GM12878 (cell line): ENCODE measurements at regions of chr12 and their contacts with region 1.

Region 1: DNA sequence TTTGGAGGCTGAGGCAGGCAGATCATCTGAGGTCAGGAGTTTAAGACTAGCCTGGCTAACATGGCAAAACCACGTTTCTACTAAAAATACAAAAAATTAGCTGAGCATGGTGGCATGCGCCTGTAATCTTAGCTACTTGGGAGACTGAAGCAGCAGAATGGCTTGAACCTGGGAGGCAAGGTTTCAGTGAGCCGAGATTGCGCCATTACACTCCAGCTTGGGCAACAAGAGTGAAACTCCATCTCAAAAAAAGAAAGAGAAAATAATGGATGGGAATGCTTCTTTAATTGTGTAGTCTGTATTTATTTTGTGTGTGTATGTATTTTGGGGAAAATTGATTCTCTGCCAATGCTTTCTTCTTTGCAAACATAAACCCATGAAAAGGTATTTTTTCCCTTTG is 32.5 kb downstream of the SRGAP1 start:
- DNase-seq: no peak
- ATAC-seq: no peak
- H3K4me3 ChIP-seq: no peak overlapping the region
- H3K27ac ChIP-seq: no peak overlapping the region
- H3K4me1 ChIP-seq: no peaks in the 10 kb centered on the region
- H3K27me3 ChIP-seq: no peaks in the 10 kb centered on the region
- CTCF ChIP-seq: no peak
- EP300 ChIP-seq: no peak
- POLR2A ChIP-seq: no peak
- RAD21 ChIP-seq: no peak

Region 2: DNA sequence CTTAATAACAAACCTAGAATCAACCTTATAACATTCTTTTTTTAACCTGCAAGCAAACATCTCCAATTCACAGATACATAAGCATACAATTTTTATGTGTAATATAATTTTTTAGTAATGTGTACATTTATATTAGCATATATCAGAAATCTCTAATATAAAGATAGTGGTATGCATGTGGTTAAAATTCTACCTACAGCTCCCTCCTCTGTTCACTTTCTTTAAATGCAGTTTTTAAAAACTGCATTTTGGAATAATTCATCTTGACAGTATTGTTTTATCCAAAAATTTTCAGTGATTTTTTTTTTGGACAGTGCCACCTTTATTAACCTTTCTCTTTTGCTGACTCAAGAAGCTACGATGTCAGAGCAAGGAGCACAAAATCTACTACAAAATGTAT is 110.5 kb before region 1 on chr12:
- CTCF ChIA-PET with region 1: no interaction called
- POLR2A ChIA-PET with region 1: no interaction called
- RAD21 ChIA-PET with region 1: no interaction called
- SMC1A ChIA-PET with region 1: no interaction called
- in situ Hi-C with region 1: no loop called
- intact Hi-C with region 1: no loop called
- DNase-seq: no peak
- ATAC-seq: no peak
- H3K4me3 ChIP-seq: no peak overlapping the region
- H3K27ac ChIP-seq: no peak overlapping the region
- H3K4me1 ChIP-seq: no peaks in the 10 kb centered on the region
- H3K27me3 ChIP-seq: no peaks in the 10 kb centered on the region
- CTCF ChIP-seq: no peak; a peak in 1 of 6 replicates
- EP300 ChIP-seq: no peak
- POLR2A ChIP-seq: no peak
- RAD21 ChIP-seq: no peak

Region 3: GRCh38 chr12:63853978-63854377 is 23.0 kb before region 1 on chr12:
- CTCF ChIA-PET with region 1: no interaction called
- POLR2A ChIA-PET with region 1: no interaction called
- RAD21 ChIA-PET with region 1: no interaction called
- SMC1A ChIA-PET with region 1: interaction called, 10 read pairs
- in situ Hi-C with region 1: no loop called
- intact Hi-C with region 1: no loop called
- DNase-seq: no peak
- ATAC-seq: peak; percentile 35
- H3K4me3 ChIP-seq: no peak overlapping the region
- H3K27ac ChIP-seq: no peak overlapping the region
- H3K4me1 ChIP-seq: no peaks in the 10 kb centered on the region
- H3K27me3 ChIP-seq: no peaks in the 10 kb centered on the region
- CTCF ChIP-seq: no peak
- EP300 ChIP-seq: no peak
- POLR2A ChIP-seq: no peak
- RAD21 ChIP-seq: no peak

Region 4: GRCh38 chr12:63888908-63889635 is 12.1 kb after region 1 on chr12:
- CTCF ChIA-PET with region 1: interaction called, 4 read pairs
- POLR2A ChIA-PET with region 1: interaction called, 5 read pairs
- RAD21 ChIA-PET with region 1: interaction called, 3 read pairs
- SMC1A ChIA-PET with region 1: interaction called, 10 read pairs
- in situ Hi-C with region 1: no loop called
- intact Hi-C with region 1: no loop called
- DNase-seq: no peak
- ATAC-seq: no peak
- H3K4me3 ChIP-seq: no peak overlapping the region
- H3K27ac ChIP-seq: no peak overlapping the region
- H3K4me1 ChIP-seq: no peaks in the 10 kb centered on the region
- H3K27me3 ChIP-seq: no peaks in the 10 kb centered on the region
- CTCF ChIP-seq: no peak
- EP300 ChIP-seq: no peak
- POLR2A ChIP-seq: no peak
- RAD21 ChIP-seq: no peak